ENCODE measurements at regions of chr12 and their contacts with region 1.

Region 1: DNA sequence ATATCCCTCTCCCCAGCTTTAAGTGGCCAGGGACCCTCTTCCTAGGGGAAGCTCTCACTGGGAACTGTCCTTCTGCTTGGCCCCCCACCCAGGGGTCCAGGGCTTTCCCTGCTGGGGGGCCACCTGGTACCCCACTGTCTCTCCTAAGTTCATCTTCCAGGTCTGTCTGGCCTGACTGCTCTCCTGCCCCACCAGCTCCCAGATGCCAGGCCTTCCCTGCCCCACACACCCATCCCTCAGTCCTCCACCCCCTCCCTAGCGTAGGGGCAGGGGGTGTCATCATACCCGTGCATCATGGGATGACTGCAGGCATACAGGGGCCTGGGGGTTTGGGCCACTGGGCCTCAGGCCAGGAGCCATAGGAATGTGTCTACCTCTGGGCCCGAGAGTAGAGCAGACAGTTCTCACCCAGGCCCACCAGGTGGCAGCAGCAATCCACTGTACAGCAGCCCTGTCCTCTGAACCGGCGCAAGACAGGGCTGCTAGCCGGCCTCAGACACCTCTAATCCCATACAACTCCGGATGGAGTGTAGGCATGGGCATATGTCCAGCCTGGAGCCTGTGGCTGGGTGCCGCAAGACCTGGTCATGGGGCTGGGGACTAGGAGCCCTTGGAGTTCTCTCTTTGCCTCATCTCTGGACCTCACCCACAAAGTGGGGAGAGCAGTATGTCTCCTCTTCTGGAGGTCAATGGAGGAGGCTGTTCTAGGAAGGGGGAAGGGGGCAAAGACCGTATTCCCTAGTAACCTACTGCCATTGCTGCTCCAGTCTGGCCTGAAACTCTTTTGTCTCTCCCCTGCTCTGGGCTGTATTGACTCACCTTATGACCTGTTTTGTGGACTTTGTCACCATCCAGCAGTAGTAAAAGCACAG is 10.0 kb upstream of the SMARCD1 start:
- DNase-seq: peak; percentile 87
- ATAC-seq: peak; percentile 93
- H3K4me3 ChIP-seq: no peak overlapping the region
- H3K27ac ChIP-seq: no peak overlapping the region
- H3K4me1 ChIP-seq: peaks cover 6% of the 10 kb centered on the region
- H3K27me3 ChIP-seq: no peaks in the 10 kb centered on the region
- CTCF ChIP-seq: peak; percentile 92

Region 2: GRCh38 chr12:49828133-49829091 is 246.8 kb before region 1 on chr12 and contains the start of gene NCKAP5L:
- CTCF ChIA-PET with region 1: interaction called, 12 read pairs
- POLR2A ChIA-PET with region 1: no interaction called
- intact Hi-C with region 1: no loop called
- DNase-seq: peak; percentile 90
- ATAC-seq: peak; percentile 87
- H3K4me3 ChIP-seq: peak within 1 kb of the TSS; percentile 80
- H3K27ac ChIP-seq: peak within 1 kb of the TSS; percentile 5; the same call in 1 of the 2 replicates
- H3K4me1 ChIP-seq: peaks cover 24% of the 10 kb centered on the region
- H3K27me3 ChIP-seq: no peaks in the 10 kb centered on the region
- CTCF ChIP-seq: no peak
- total RNA-seq, gene NCKAP5L: 13.3 and 14.2 TPM in 2 replicates

Region 3: GRCh38 chr12:49903695-49904423 is 171.3 kb before region 1 on chr12 and contains the start of gene FAIM2:
- CTCF ChIA-PET with region 1: no interaction called
- POLR2A ChIA-PET with region 1: no interaction called
- intact Hi-C with region 1: no loop called
- DNase-seq: no peak
- ATAC-seq: no peak
- H3K4me3 ChIP-seq: no peak within 1 kb of the TSS
- H3K27ac ChIP-seq: no peak within 1 kb of the TSS
- H3K4me1 ChIP-seq: no peaks in the 10 kb centered on the region
- H3K27me3 ChIP-seq: no peaks in the 10 kb centered on the region
- CTCF ChIP-seq: no peak
- total RNA-seq, gene FAIM2: 0.18 TPM in 1 of 2 replicates, not detected in the other

Region 4: DNA sequence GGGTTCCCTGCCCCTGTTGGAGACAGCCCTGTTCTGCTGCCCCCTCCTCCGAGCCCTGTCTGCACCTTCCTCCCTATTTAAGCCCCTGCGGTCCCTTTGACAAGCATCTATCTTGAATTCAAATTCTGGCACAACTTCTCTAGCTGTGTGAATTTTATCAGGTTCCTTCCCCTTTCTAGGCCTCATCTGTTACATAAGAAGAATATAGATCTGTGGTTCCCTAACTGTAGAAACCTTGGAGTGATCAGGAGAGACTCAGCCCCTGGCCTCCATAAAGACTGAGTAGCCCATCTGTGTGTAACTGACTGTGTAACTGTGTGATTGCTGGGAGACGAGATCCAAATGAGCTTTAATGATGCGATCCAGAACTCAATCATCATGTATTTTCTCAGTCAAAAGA is 36.8 kb before region 1 on chr12:
- CTCF ChIA-PET with region 1: interaction called, 23 read pairs
- POLR2A ChIA-PET with region 1: no interaction called
- intact Hi-C with region 1: loop called (anchors 2 kb)
- DNase-seq: no peak
- ATAC-seq: no peak
- H3K4me3 ChIP-seq: no peak overlapping the region
- H3K27ac ChIP-seq: no peak overlapping the region
- H3K4me1 ChIP-seq: no peaks in the 10 kb centered on the region
- H3K27me3 ChIP-seq: no peaks in the 10 kb centered on the region
- CTCF ChIP-seq: no peak

Region 5: DNA sequence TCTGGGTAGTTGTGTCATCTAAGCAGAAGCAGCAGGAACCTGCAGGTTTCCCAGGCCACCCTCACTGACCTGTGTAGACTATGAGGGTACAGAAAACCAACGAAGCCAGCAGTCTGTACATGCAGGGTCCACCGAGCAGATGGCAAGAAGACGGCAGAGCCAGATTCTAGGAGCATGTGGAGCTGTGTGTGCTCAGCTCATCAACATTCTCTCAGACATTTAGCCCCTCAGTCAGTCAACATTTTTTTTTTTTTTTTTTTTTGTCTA is 25.1 kb before region 1 on chr12:
- CTCF ChIA-PET with region 1: no interaction called
- POLR2A ChIA-PET with region 1: no interaction called
- intact Hi-C with region 1: no loop called
- DNase-seq: no peak
- ATAC-seq: no peak
- H3K4me3 ChIP-seq: no peak overlapping the region
- H3K27ac ChIP-seq: no peak overlapping the region
- H3K4me1 ChIP-seq: no peaks in the 10 kb centered on the region
- H3K27me3 ChIP-seq: no peaks in the 10 kb centered on the region
- CTCF ChIP-seq: no peak

Region 6: DNA sequence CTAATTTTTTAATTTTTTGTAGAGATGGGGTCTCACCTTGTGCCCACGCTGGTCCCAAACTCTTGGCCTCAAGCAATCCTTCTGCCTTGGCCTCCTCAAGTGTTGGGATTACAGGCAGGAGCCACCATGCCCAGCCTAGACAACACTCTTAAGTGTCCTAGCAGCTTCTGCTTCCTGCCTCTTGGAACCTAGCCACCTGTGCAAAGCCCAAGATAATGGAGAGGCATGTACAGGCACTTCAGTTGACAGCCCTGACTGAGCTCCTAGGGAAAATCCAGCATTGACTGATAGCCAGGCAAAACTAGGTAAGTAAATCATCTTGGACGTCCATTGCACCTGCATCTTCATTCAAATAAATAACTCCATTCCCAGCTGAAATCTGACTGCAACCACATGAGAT is 52.4 kb after region 1 on chr12:
- CTCF ChIA-PET with region 1: no interaction called
- POLR2A ChIA-PET with region 1: no interaction called
- intact Hi-C with region 1: loop called (anchors 5 kb)
- DNase-seq: no peak
- ATAC-seq: no peak
- H3K4me3 ChIP-seq: no peak overlapping the region
- H3K27ac ChIP-seq: no peak overlapping the region
- H3K4me1 ChIP-seq: no peaks in the 10 kb centered on the region
- H3K27me3 ChIP-seq: no peaks in the 10 kb centered on the region
- CTCF ChIP-seq: no peak

Region 7: DNA sequence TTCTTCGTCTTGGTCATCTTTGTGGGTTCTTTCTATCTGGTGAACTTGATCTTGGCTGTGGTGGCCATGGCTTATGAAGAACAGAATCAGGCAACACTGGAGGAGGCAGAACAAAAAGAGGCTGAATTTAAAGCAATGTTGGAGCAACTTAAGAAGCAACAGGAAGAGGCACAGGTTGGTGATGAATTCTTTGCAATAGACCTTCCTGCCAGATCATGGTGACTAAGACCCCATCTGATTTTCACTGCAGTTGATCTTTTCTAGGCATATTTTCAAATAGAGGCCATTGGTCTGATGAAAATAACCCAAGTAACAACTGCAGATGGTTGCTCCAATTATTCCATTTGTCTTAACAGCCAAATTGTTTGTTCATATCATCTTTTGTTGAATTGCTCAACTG is 1630.3 kb after region 1 on chr12:
- CTCF ChIA-PET with region 1: interaction called, 11 read pairs
- POLR2A ChIA-PET with region 1: no interaction called
- intact Hi-C with region 1: no loop called
- DNase-seq: peak; percentile 36
- ATAC-seq: peak; percentile 20; the same call in 1 of the 2 replicates
- H3K4me3 ChIP-seq: no peak overlapping the region
- H3K27ac ChIP-seq: no peak overlapping the region; the same call in 1 of the 2 replicates
- H3K4me1 ChIP-seq: peaks cover 9% of the 10 kb centered on the region
- H3K27me3 ChIP-seq: no peaks in the 10 kb centered on the region
- CTCF ChIP-seq: no peak